ENCODE measurements at regions of chr4 and their contacts with region 1.

Region 1: DNA sequence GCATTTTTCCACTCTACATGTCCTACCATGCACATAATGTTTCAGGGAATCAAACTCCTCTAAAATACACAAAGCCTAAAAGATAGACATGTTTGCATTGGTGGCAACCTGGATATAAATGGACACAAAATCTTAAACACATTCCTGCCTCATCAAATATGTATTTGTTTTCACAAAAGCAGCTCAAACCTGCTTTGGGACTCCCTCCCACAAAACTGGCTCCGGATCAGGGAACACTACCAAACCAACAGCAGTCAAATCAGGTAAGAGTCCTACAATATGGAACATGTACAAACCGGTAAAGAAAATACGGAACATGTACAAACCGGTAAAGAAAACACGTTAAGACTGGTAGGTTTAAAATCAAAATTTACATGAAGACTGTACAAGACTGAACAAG is 4.2 kb downstream of the AMTN start:
- DNase-seq: no peak
- H3K4me3 ChIP-seq: no peak overlapping the region
- CTCF ChIP-seq: no peak

Region 2: GRCh38 chr4:70505151-70505748 is 17.3 kb before region 1 on chr4:
- CTCF ChIA-PET with region 1: interaction called, 10 read pairs
- POLR2A ChIA-PET with region 1: no interaction called
- DNase-seq: no peak
- H3K4me3 ChIP-seq: no peak overlapping the region
- CTCF ChIP-seq: peak; percentile 89

Region 3: DNA sequence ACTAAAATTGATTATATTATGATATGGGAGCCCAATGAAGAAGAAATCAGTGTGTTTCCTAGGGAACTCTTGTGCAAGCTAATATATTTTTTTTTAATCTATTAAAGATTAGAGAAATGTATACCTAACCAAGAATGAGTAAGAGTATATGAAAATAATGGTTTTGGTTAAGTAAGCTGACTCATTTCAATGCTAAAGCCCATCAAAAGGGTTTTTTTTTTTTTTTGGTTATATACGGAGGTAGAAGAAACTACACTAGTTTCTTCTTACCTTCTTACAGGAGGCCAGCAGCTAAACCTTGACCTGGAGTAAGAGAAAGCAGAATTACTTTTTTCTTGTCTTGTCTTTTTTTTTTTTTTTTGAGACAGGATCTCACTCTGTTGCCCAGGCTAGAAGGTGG is 226.7 kb after region 1 on chr4:
- CTCF ChIA-PET with region 1: no interaction called
- POLR2A ChIA-PET with region 1: no interaction called
- DNase-seq: no peak
- H3K4me3 ChIP-seq: no peak overlapping the region
- CTCF ChIP-seq: no peak